PC-9 (cell line): ENCODE measurements at regions of chr19 and their contacts with region 1.

Region 1: GRCh38 chr19:36687214-36688056 is at the start of gene ZNF567:
- DNase-seq: peak; percentile 89 to 98
- H3K4me3 ChIP-seq: peak within 1 kb of the TSS; percentile 82
- H3K27ac ChIP-seq: peak within 1 kb of the TSS; percentile 38
- H3K4me1 ChIP-seq: no peaks in the 10 kb centered on the region; the same call in 1 of the 2 replicates
- H3K27me3 ChIP-seq: no peaks in the 10 kb centered on the region
- CTCF ChIP-seq: no peak
- total RNA-seq, gene ZNF567: 7.0 and 7.9 TPM in 2 replicates

Region 2: DNA sequence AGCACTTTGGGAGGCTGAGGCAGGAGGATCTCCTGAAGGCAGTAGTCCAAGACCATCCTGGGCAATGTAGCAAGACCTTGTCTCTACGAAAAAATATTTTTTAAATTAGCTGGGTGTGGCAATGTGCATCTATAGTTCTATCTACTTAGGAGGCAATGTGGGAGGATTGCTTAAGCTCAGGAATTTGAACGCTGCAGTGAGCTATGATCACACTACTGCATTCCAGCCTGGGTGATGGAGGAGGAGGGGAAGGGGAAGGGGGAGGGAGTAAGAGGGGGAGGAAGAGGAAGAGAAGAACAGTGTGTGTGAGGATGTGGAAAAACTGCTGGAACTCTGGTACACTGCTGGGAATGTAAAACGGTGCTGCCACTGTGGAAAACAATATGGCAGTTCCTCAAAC is 645.6 kb before region 1 on chr19:
- CTCF ChIA-PET with region 1: no interaction called
- POLR2A ChIA-PET with region 1: interaction called, 36 read pairs
- intact Hi-C with region 1: no loop called
- DNase-seq: peak; percentile 36 to 61
- H3K4me3 ChIP-seq: no peak overlapping the region
- H3K27ac ChIP-seq: no peak overlapping the region
- H3K4me1 ChIP-seq: peaks cover 8% of the 10 kb centered on the region
- H3K27me3 ChIP-seq: no peaks in the 10 kb centered on the region
- CTCF ChIP-seq: no peak

Region 3: DNA sequence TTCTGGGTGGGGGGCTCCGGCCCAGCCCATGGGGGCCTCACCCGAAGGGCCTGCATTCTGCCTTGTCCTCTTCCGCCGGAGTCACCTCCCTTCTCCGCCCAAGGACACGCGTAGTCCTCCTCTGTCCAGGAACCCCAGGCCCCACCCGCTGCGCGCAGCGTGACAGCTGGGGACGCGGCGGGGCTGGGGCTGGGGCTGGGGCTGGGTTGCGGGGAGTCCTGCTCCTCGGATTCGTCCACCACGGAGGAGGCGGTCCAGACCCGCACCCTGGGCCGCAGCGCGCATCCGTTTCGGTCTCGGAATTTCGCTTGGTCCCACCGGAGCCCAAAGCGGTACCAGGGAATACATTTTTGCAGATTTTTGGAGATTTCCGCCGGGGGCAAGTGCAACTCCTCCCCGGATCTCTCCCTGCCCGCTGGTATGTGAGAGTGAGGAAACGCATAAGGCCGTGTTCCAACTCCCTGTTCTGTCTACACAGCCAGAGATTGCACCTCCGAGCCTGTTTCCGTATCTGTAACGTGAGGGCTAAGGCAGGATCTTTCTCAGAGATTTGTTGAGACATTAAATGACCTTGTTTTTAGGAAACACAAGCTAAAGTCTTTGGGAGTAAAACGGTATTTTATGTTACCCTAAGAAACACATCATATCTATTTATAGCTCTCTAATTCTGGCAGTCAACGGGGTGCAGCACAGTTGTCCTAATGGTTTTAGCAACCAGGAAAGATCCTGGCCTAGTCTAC is 534.9 kb before region 1 on chr19 and contains the start of gene COX7A1:
- CTCF ChIA-PET with region 1: no interaction called
- POLR2A ChIA-PET with region 1: no interaction called
- intact Hi-C with region 1: no loop called
- DNase-seq: no peak
- H3K4me3 ChIP-seq: no peak within 1 kb of the TSS
- H3K27ac ChIP-seq: no peak within 1 kb of the TSS
- H3K4me1 ChIP-seq: no peaks in the 10 kb centered on the region
- H3K27me3 ChIP-seq: no peaks in the 10 kb centered on the region
- CTCF ChIP-seq: no peak
- total RNA-seq, gene COX7A1: not detected in 2 replicates

Region 4: DNA sequence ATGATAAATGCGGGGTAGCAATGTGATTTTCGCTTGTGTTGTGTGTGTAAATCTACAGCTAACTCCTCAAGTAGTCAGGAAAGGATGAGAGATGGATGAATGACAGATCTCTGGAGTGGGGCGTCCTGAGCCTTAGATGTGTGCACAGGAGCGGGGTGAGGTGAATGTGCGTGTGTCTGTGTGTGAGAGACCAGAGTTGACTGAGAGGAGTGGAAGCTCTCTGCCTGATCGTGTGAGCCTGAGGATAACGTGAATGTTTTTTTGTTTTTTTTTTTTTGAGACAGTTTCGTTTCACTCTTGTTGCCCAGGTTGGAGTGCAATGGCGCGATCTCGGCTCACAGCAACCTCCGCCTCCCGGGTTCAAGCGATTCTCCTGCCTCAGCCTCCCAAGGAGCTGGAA is 21.6 kb before region 1 on chr19:
- CTCF ChIA-PET with region 1: no interaction called
- POLR2A ChIA-PET with region 1: no interaction called
- intact Hi-C with region 1: loop called (anchors 1 kb)
- DNase-seq: no peak
- H3K4me3 ChIP-seq: peak overlapping the region; percentile 79
- H3K27ac ChIP-seq: no peak overlapping the region
- H3K4me1 ChIP-seq: 0 out of 2 replicates have a peak, but pooled peaks cover 5% of the 10 kb centered on the region
- H3K27me3 ChIP-seq: no peaks in the 10 kb centered on the region
- CTCF ChIP-seq: no peak